Endothelial cell of umbilical vein (primary cell): ENCODE measurements at regions of chr10 and their contacts with region 1.

Region 1: DNA sequence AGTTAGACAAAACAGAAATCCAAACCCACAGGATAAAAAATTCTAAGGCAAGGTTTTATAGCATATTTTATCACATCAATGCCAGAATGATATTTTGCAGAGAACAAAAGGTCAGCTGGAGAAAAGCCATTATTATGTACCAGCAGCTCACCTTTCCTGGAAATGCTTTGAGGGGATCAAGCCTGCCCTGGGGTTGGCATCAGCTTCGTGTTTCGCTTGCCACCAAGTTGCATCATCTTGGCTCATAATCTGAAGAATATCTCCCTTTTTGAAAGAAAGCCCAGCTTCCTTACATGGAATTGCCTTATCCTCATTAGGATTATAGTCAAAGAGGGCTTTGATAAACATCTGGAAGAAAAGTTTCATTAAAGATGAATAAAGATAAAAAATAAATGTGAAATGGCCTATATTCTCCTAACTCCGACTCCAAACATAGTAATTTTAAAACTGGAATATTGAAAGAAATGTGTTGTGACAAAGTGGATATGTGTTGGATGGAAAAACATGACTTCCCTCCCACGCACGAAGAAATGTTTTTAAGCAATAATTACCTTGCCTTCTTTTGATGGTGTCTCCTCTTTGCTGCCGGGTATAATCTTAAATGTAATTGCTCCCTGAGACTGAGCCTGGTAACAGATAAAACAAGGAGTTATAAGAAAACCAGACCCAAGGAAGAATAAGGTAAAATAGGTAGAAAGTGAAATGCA is 121.3 kb upstream of the ODAD2 start:
- DNase-seq: no peak
- H3K4me3 ChIP-seq: no peak overlapping the region
- H3K27ac ChIP-seq: no peak overlapping the region
- H3K4me1 ChIP-seq: peaks cover 6% of the 10 kb centered on the region
- H3K27me3 ChIP-seq: no peaks in the 10 kb centered on the region
- CTCF ChIP-seq: no peak
- POLR2A ChIP-seq: no peak

Region 2: GRCh38 chr10:30070001-30070685 is 1949.9 kb after region 1 on chr10:
- CTCF ChIA-PET with region 1: no interaction called
- POLR2A ChIA-PET with region 1: no interaction called
- dilution Hi-C with region 1: no loop called
- intact Hi-C with region 1: loop called (anchors 10 kb)
- DNase-seq: peak; percentile 39
- H3K4me3 ChIP-seq: no peak overlapping the region
- H3K27ac ChIP-seq: no peak overlapping the region
- H3K4me1 ChIP-seq: peaks cover 8% of the 10 kb centered on the region
- H3K27me3 ChIP-seq: no peaks in the 10 kb centered on the region
- CTCF ChIP-seq: no peak
- POLR2A ChIP-seq: no peak